Endothelial cell of umbilical vein (primary cell): ENCODE measurements at regions of chr7 and their contacts with region 1.

Region 1: DNA sequence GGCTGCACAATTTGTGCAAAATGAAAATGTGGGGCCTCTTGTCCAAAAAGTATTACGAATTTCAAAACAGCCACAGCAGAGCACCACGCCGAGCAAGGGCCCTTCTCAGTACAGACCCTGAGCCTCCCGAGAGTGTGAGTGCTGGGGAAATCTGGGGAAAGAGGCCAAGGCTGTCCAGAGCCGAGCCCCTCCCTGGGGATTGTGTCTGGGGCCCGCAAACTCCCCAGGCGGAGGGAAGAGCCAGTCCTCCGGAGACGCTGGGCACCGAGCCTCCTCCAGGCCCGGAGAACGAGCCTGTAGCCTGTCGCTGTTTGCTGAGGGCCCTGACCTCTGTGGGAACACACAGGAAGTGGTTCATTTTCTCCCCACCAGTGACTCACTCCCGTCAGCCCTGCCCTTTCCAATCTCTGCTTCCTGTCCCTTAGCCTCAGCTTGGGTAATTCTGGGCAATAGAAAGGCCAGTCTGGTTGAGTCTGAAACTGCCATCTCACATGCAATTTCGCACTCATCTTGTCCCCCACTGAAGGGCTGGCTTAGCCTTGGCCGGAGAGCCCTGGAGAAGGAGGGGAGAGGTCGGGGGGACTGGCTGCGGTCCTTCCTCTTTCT is 19.5 kb upstream of the GNA12 start:
- DNase-seq: peak; percentile 94
- H3K4me3 ChIP-seq: peak overlapping the region in 1 of 3 experiments; percentile 34
- H3K27ac ChIP-seq: peak overlapping the region; percentile 94
- H3K4me1 ChIP-seq: peaks cover 22% of the 10 kb centered on the region
- H3K27me3 ChIP-seq: no peaks in the 10 kb centered on the region
- CTCF ChIP-seq: no peak
- POLR2A ChIP-seq: peak; percentile 46

Region 2: DNA sequence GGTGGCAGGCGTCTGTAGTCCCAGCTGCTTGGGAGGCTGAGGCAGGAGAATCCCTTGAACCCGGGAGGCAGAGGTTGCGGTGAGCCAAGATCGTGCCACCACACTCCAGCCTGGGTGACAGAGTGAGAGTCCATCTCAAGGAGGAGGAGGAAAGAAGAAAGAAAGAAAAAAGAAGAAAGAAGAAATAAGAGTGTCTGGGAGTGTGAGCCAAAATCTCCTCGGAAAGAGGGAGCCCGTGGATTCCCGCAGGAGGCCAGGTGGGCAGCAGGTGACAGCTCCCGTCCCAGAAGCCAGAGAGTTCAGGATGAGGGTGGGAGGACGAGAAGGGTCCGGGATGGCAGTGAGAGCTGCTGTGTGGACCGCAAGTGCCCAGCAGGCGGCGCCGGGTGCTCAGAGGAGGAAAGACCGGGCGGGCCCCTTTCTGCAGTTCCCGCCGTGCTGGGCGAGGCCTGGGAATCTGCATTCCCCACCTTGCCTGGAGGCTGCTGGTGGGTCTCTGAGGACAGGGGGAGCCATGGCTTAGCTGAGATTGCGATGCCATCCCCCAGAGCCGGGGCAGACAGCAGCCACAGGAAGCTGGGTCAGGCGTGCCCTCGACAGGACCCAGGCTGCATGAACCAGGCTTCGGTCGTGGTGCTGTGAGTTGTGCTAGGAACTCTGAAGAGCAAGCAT is 192.7 kb before region 1 on chr7:
- CTCF ChIA-PET with region 1: interaction called, 3 read pairs
- POLR2A ChIA-PET with region 1: no interaction called
- dilution Hi-C with region 1: no loop called
- intact Hi-C with region 1: loop called (anchors 5 kb)
- DNase-seq: peak; percentile 35
- H3K4me3 ChIP-seq: no peak overlapping the region
- H3K27ac ChIP-seq: no peak overlapping the region
- H3K4me1 ChIP-seq: no peaks in the 10 kb centered on the region
- H3K27me3 ChIP-seq: peaks cover 0 to 3% of the 10 kb centered on the region in 2 experiments
- CTCF ChIP-seq: peak; percentile 84 to 95
- POLR2A ChIP-seq: no peak

Region 3: GRCh38 chr7:2779086-2779485 is 84.5 kb before region 1 on chr7:
- CTCF ChIA-PET with region 1: no interaction called
- POLR2A ChIA-PET with region 1: no interaction called
- dilution Hi-C with region 1: no loop called
- intact Hi-C with region 1: no loop called
- DNase-seq: no peak
- H3K4me3 ChIP-seq: no peak overlapping the region
- H3K27ac ChIP-seq: no peak overlapping the region
- H3K4me1 ChIP-seq: peaks cover 5% of the 10 kb centered on the region
- H3K27me3 ChIP-seq: no peaks in the 10 kb centered on the region
- CTCF ChIP-seq: no peak
- POLR2A ChIP-seq: no peak

Region 4: GRCh38 chr7:2821161-2821841 is 42.3 kb before region 1 on chr7:
- CTCF ChIA-PET with region 1: interaction called, 3 read pairs
- POLR2A ChIA-PET with region 1: no interaction called
- dilution Hi-C with region 1: no loop called
- intact Hi-C with region 1: loop called (anchors 2 kb)
- DNase-seq: peak; percentile 67
- H3K4me3 ChIP-seq: no peak overlapping the region
- H3K27ac ChIP-seq: peak overlapping the region; percentile 83
- H3K4me1 ChIP-seq: peaks cover 22% of the 10 kb centered on the region
- H3K27me3 ChIP-seq: no peaks in the 10 kb centered on the region
- CTCF ChIP-seq: no peak
- POLR2A ChIP-seq: no peak

Region 5: DNA sequence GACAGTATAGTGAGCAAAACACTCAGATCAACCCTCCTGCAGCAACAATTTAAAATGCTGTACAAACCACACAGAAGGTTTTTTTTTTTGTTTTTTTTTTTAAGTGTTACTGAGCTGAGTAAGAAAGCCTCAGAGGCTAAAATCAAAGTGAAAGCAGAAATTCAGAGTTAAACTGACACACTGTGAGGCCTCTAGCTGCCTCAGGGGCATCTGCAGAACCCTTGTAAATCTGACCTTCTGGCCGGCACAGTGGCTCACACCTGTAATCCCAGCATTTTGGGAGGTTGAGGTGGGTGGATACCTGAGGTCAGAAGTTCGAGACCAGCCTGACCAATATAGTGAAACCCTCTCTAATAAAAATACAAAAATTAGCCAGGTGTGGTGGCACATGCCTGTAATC is 12.1 kb before region 1 on chr7:
- CTCF ChIA-PET with region 1: no interaction called
- POLR2A ChIA-PET with region 1: no interaction called
- dilution Hi-C with region 1: no loop called
- intact Hi-C with region 1: no loop called
- DNase-seq: no peak
- H3K4me3 ChIP-seq: no peak overlapping the region
- H3K27ac ChIP-seq: no peak overlapping the region
- H3K4me1 ChIP-seq: no peaks in the 10 kb centered on the region
- H3K27me3 ChIP-seq: no peaks in the 10 kb centered on the region
- CTCF ChIP-seq: no peak
- POLR2A ChIP-seq: no peak

Region 6: GRCh38 chr7:2886900-2887299 is 23.3 kb after region 1 on chr7:
- CTCF ChIA-PET with region 1: interaction called, 10 read pairs
- POLR2A ChIA-PET with region 1: no interaction called
- dilution Hi-C with region 1: no loop called
- intact Hi-C with region 1: no loop called
- DNase-seq: peak; percentile 62
- H3K4me3 ChIP-seq: no peak overlapping the region
- H3K27ac ChIP-seq: no peak overlapping the region
- H3K4me1 ChIP-seq: no peaks in the 10 kb centered on the region
- H3K27me3 ChIP-seq: no peaks in the 10 kb centered on the region
- CTCF ChIP-seq: peak; percentile 84 to 90
- POLR2A ChIP-seq: no peak

Region 7: GRCh38 chr7:3300651-3301378 is 437.3 kb after region 1 on chr7 and contains the start of gene SDK1:
- CTCF ChIA-PET with region 1: no interaction called
- POLR2A ChIA-PET with region 1: no interaction called
- dilution Hi-C with region 1: no loop called
- intact Hi-C with region 1: loop called (anchors 10 kb)
- DNase-seq: peak; percentile 86
- H3K4me3 ChIP-seq: peak within 1 kb of the TSS in 2 of 3 experiments; percentile 41 to 43
- H3K27ac ChIP-seq: no peak within 1 kb of the TSS
- H3K4me1 ChIP-seq: peaks cover 6% of the 10 kb centered on the region
- H3K27me3 ChIP-seq: peaks cover 25 to 33% of the 10 kb centered on the region in 2 experiments
- CTCF ChIP-seq: peak; percentile 85 to 88
- POLR2A ChIP-seq: no peak
- total RNA-seq, gene SDK1: 2.4 and 3.9 TPM in 2 replicates